Cardiac septum (tissue), 1 donor: ENCODE measurements at regions of chr1 and their contacts with region 1.

Region 1: DNA sequence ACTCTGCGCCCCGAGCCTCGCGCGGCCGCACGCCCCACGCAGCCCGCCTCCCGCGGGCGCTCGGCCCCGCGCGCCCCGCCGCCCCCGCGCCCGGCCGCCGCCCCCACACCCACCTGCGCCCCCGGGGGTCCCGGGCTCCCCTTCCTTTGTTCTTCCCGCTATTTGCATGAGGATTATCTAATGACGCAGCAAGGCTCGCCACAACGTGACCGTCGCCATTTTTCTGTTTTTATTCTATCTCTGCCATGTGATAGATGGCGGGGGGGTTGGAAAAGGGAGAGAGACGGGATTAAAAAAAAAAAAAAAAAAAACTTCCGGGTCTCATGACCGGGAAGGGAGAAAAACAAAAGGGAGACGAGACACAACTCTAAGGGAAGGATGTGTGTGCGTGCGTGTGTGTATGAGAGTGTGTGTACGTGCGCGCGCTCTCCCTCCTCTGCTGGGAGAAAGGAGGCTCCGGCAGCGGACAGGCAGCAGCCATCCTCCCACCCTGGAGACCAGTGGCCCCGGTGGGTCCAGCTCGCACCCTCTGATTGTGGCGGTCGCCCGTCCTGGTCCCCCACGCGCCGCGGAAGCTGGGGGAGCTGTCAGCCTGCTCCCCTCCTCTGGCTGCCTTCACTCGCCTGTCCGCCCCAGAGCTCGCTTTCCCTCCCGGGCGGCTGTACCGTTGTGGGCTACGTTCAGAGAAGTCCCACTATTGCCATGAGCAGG is 80.4 kb upstream of the AK4 start:
- DNase-seq: peak; percentile 81

Region 2: DNA sequence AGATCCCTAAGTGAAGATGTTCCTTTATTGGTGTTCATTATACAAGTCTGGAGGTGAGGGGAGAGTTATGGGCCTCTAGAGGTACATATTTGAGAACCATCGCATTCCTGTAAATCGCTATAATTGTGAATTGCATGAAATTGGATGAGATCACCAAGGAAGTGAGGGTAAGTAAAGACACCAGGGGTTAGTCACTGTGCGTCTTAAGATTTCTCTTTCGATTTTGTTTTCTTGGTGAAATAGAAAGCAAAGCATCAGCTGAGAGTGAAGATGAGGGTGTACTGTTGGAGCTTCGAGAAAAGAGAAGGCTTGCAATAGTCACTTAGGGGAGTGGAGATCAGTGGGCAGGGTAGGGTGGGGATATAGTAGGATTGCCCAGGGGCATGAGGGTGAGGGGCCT is 240.7 kb before region 1 on chr1:
- intact Hi-C with region 1: no loop called
- DNase-seq: no peak

Region 3: DNA sequence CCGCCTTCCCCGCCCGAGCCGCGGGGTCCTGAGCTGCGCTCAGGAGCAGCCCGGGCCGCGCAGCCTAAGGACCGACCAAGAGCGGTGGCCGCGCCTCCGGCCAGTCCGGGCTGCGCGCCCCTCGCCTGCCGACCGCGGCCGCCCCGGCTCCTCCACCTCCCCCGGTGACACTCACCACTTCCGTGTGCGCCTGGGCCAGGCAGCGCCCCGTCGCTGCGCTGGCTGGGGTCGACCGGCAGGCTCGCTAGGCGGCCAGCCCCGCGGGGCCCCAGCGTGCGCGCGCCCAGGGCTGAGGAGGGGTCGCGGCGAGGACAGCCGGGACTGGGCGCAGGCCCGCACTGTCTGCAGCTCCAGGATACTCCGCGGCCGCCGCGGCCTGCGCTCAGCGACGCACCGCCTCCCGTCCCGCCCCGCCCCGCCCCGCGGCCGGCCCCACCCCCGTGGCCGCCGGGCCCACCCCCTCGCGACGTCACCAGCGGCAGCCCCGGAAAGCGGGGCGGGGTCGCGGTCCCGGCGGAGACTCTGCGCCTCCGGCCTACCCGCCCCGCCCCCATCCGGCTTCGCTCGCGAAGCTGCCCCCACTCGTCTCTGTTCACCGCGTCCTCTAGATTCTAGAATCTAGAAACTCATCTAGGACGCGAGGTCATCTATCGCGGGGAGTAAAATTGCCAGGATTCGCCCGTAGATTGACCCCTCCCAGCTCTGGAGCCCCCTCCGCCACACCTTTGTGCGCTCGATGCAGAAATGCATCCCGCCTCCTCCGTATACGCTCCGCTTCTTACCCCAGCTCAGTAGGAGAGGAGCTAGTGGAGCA is 101.3 kb before region 1 on chr1 and contains the start of gene JAK1:
- intact Hi-C with region 1: loop called (anchors 2 kb)
- DNase-seq: peak; percentile 96
- total RNA-seq, gene JAK1: 76.4 TPM

Region 4: GRCh38 chr1:65148548-65149350 is 81.1 kb after region 1 on chr1:
- intact Hi-C with region 1: loop called (anchors 2 kb)
- DNase-seq: peak; percentile 79

Region 5: DNA sequence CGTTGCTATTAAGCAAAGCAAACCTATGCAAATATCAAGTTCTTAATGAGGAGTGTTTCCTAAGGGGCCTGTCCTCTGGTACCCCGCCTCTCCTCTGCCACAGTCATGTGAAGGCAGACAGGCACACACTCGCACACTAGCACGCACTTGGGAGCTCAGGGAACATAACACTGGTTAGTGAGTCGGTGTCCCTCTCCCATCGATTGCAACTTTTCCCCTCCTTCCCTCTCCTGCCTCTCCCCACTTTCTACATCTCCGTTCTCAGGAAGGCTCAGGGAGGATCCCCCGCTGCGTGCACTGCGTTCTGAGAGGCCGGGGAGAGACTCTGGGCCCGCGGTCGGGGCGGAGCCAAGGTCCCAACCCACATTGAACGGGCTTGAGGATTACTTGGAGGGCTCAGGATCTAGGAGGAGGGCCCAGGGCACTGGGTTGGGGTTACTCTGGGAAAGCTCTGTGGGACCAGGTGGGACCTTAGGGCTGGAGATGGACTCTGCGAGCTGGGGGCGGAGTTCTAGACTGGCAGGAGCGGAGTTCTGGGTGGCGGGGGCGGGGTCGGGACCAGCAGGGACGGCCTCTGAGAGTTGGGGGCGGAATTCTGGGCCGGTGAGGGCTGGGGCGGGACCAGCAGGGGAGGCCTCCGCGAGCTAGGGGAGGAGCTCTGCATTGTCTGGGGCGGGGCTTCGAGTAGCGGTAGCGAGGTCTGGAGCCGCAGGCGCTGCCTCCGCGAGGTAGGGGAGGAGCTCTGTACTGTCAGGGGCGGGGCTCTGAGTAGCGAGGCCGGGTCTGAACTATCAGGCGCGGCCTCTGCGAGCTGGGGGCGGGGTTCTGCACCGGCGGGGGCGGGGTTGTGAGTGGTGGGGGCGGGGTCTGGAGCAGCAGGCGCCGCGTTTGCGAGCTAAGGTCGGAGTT is 352.3 kb after region 1 on chr1:
- intact Hi-C with region 1: loop called (anchors 5 kb)
- DNase-seq: peak; percentile 100